HepG2 (cell line): ENCODE measurements at regions of chr4 and their contacts with region 1.

Region 1: DNA sequence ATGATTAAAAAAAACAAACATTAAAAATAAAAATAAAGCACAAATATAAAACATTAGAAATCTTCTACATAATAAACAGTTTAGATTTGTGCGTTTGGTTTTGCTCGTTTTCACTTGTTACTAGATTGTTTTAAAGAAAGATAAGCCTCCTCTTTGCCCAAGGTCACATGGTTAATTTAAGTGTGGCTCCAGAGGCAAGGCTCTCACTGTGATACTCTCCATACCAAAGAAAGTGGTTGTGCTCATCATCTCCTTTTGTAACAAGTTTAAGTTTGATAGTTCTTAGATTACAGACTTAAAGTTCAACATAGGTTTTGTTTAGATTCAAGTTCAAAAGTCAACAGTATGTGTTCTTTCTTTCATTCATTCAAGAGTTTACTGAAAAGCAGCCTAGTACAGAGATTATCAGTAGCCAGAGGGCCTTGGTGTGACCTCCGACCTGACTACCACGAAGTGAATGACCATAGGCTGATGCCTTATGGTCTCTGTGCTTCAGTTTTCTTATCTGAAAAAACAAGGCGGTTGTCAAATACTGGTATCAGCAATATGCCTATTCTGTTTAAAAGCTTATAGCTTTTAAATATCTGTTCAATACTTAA is 133.2 kb downstream of the ZAR1 start:
- DNase-seq: peak; percentile 62
- ATAC-seq: peak; percentile 99
- H3K4me3 ChIP-seq: no peak overlapping the region
- H3K27ac ChIP-seq: no peak overlapping the region
- H3K4me1 ChIP-seq: peaks cover 16% of the 10 kb centered on the region
- H3K27me3 ChIP-seq: no peaks in the 10 kb centered on the region
- CTCF ChIP-seq: no peak
- EP300 ChIP-seq: peak in 1 of 2 experiments; percentile 48; a peak in 1 of 4 replicates
- POLR2A ChIP-seq: no peak
- RAD21 ChIP-seq: no peak

Region 2: DNA sequence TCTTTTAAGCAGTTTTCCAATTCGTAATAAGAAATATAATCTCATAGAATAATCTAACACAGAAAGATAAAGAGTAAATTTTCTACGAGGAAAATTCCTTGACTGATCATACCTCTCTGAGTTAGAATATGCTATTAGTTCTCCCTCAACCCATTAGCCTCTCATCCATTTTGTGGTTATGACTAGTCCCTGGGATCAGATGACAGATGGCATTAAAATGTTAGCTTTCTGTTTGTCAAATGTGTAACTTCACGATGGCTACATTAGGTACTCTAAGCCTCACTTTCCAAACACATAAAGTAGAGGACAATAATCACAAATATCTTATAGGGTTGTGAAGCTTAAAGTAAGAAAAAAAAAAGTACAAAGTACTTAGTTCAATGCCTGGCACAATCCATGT is 21.1 kb before region 1 on chr4:
- CTCF ChIA-PET with region 1: no interaction called
- POLR2A ChIA-PET with region 1: no interaction called
- in situ Hi-C with region 1: no loop called
- intact Hi-C with region 1: loop called (anchors 2 kb)
- DNase-seq: no peak
- ATAC-seq: no peak
- H3K4me3 ChIP-seq: no peak overlapping the region
- H3K27ac ChIP-seq: no peak overlapping the region
- H3K4me1 ChIP-seq: peaks cover 36% of the 10 kb centered on the region
- H3K27me3 ChIP-seq: no peaks in the 10 kb centered on the region
- CTCF ChIP-seq: no peak
- EP300 ChIP-seq: no peak
- POLR2A ChIP-seq: no peak
- RAD21 ChIP-seq: no peak

Region 3: GRCh38 chr4:48720459-48720858 is 97.2 kb after region 1 on chr4:
- CTCF ChIA-PET with region 1: no interaction called
- POLR2A ChIA-PET with region 1: no interaction called
- in situ Hi-C with region 1: no loop called
- intact Hi-C with region 1: no loop called
- DNase-seq: no peak
- ATAC-seq: no peak
- H3K4me3 ChIP-seq: no peak overlapping the region
- H3K27ac ChIP-seq: no peak overlapping the region
- H3K4me1 ChIP-seq: peaks cover 31% of the 10 kb centered on the region
- H3K27me3 ChIP-seq: no peaks in the 10 kb centered on the region
- CTCF ChIP-seq: no peak
- EP300 ChIP-seq: no peak
- POLR2A ChIP-seq: no peak
- RAD21 ChIP-seq: no peak